ENCODE measurements at regions of chr12 and their contacts with region 1.

Region 1: DNA sequence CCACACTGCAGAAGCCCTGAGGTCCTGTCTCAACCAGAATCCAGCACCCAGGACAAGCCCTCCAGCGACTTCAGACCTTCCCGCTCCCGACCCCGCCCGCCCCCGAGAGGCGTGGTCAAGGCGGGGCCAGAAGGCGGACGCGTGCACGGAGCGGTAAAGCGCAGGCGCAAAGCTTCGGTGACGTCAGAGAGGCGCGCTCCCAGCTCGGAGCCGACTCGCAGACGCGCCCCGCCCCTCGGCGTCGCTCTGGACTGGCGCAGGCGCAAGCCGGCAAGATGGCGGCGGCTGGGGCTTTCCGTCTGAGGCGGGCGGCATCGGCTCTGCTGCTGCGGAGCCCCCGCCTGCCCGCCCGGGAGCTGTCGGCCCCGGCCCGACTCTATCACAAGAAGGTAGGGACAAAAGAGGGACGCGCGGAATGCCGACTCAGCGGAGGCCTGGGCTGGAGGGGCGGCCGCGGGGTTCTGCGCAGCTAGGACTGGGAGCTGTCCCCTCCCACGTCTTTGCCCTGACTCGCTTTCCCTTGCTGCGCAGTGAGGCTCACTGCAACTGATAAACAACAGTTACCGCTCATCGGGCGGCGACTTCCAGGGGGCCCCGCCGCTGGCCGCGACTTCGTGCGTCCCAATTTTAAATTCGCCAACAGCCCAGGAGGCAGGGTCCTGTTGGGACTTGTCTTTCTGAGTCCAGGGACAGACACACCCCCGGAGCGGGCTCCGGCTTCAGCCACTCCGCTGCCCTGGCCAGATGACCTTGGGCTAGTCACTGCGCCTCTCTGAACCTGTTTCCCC is at the start of gene ISCU:
- DNase-seq: peak; percentile 98 to 99
- H3K4me3 ChIP-seq: peak within 1 kb of the TSS; percentile 88 to 99 (median 97)
- H3K27ac ChIP-seq: peak within 1 kb of the TSS; percentile 87 to 96 (median 89)
- H3K4me1 ChIP-seq: peaks cover 37 to 82% (median 70%) of the 10 kb centered on the region in 4 donors
- H3K27me3 ChIP-seq: no peaks in the 10 kb centered on the region
- CTCF ChIP-seq: no peak
- EP300 ChIP-seq: no peak
- POLR2A ChIP-seq: peak in 1 of 4 donors; percentile 20
- total RNA-seq, gene ISCU: 83.3 to 251 (median 154) TPM

Region 2: GRCh38 chr12:108622421-108622820 is 59.9 kb after region 1 on chr12:
- intact Hi-C with region 1: loop called (anchors 5 kb)
- DNase-seq: peak in 1 of 2 donors; percentile 76
- H3K4me3 ChIP-seq: no peak overlapping the region
- H3K27ac ChIP-seq: peak overlapping the region in 1 of 5 donors; percentile 55
- H3K4me1 ChIP-seq: peaks cover 0 to 33% (median 10%) of the 10 kb centered on the region in 4 donors
- H3K27me3 ChIP-seq: no peaks in the 10 kb centered on the region
- CTCF ChIP-seq: no peak
- EP300 ChIP-seq: no peak
- POLR2A ChIP-seq: no peak

Region 3: GRCh38 chr12:108803428-108804105 is 241.0 kb after region 1 on chr12:
- intact Hi-C with region 1: loop called (anchors 10 kb)
- DNase-seq: peak; percentile 80 to 95
- H3K4me3 ChIP-seq: no peak overlapping the region
- H3K27ac ChIP-seq: peak overlapping the region in 4 of 5 donors; percentile 80 to 87 (median 86)
- H3K4me1 ChIP-seq: peaks cover 0 to 74% (median 44%) of the 10 kb centered on the region in 4 donors
- H3K27me3 ChIP-seq: no peaks in the 10 kb centered on the region
- CTCF ChIP-seq: peak in 6 of 7 experiments; percentile 92 to 97 (median 94)
- EP300 ChIP-seq: no peak
- POLR2A ChIP-seq: no peak